Left ventricle myocardium inferior (tissue), 1 donor: ENCODE measurements at regions of chr3 and their contacts with region 1.

Region 1: DNA sequence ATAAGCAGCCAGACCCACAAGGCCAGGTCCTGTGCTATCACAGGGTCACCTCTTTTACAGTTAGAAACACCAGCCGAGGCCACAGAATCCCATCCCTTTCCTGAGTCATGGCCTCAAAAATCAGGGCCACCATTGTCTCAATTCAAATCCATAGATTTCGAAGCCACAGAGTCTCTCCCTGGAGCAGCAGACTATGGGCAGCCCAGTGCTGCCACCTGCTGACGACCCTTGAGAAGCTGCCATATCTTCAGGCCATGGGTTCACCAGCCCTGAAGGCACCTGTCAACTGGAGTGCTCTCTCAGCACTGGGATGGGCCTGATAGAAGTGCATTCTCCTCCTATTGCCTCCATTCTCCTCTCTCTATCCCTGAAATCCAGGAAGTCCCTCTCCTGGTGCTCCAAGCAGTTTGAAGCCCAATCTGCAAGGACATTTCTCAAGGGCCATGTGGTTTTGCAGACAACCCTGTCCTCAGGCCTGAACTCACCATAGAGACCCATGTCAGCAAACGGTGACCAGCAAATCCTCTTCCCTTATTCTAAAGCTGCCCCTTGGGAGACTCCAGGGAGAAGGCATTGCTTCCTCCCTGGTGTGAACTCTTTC is 39.6 kb downstream of the TGM4 start:
- DNase-seq: peak; percentile 56
- H3K4me3 ChIP-seq: no peak overlapping the region
- H3K27ac ChIP-seq: no peak overlapping the region
- H3K4me1 ChIP-seq: peaks cover 16% of the 10 kb centered on the region
- H3K27me3 ChIP-seq: peaks cover 4% of the 10 kb centered on the region
- CTCF ChIP-seq: peak; percentile 84

Region 2: DNA sequence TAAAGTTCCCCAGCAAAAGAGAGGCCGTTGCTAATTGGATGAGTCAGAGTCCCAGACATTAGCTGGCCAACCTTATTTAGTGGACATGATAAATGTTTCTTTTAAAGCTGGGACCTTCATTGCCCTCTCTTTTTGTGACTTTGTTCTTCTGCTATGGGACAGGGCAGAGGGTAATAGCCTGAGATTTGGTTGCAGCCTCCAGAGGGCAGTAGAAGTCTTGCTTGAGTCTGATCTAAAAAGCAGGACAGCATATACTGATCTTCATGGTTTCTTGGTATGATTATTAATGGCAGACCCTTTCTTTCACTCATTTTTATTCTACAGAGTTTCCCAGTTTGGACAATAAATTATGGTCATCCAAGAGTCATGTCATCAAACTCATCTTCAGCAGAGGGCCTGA is 384.0 kb before region 1 on chr3:
- intact Hi-C with region 1: loop called (anchors 5 kb)
- DNase-seq: no peak
- H3K4me3 ChIP-seq: no peak overlapping the region
- H3K27ac ChIP-seq: no peak overlapping the region
- H3K4me1 ChIP-seq: no peaks in the 10 kb centered on the region
- H3K27me3 ChIP-seq: peaks cover 62% of the 10 kb centered on the region
- CTCF ChIP-seq: peak; percentile 19